MCF 10A (cell line): ENCODE measurements at regions of chr3 and their contacts with region 1.

Region 1: GRCh38 chr3:36957862-36958686 is 13.2 kb upstream of the TRANK1 start:
- DNase-seq: peak; percentile 82
- H3K4me3 Mint-ChIP-seq: peak overlapping the region; percentile 38
- H3K27ac Mint-ChIP-seq: peak overlapping the region; percentile 90
- H3K4me1 Mint-ChIP-seq: peaks cover 11% of the 10 kb centered on the region
- H3K27me3 Mint-ChIP-seq: no peaks in the 10 kb centered on the region
- CTCF ChIP-seq: no peak

Region 2: GRCh38 chr3:36679384-36680200 is 278.5 kb before region 1 on chr3:
- CTCF ChIA-PET with region 1: no interaction called
- POLR2A ChIA-PET with region 1: no interaction called
- intact Hi-C with region 1: no loop called
- DNase-seq: peak; percentile 80
- H3K4me3 Mint-ChIP-seq: peak overlapping the region; percentile 41
- H3K27ac Mint-ChIP-seq: peak overlapping the region; percentile 99
- H3K4me1 Mint-ChIP-seq: peaks cover 34% of the 10 kb centered on the region
- H3K27me3 Mint-ChIP-seq: no peaks in the 10 kb centered on the region
- CTCF ChIP-seq: no peak

Region 3: GRCh38 chr3:36729204-36730056 is 228.6 kb before region 1 on chr3:
- CTCF ChIA-PET with region 1: interaction called, 82 read pairs
- POLR2A ChIA-PET with region 1: no interaction called
- intact Hi-C with region 1: loop called (anchors 1 kb)
- DNase-seq: peak; percentile 64
- H3K4me3 Mint-ChIP-seq: no peak overlapping the region
- H3K27ac Mint-ChIP-seq: no peak overlapping the region
- H3K4me1 Mint-ChIP-seq: no peaks in the 10 kb centered on the region
- H3K27me3 Mint-ChIP-seq: peaks cover 21% of the 10 kb centered on the region
- CTCF ChIP-seq: peak; percentile 72

Region 4: GRCh38 chr3:36814776-36815175 is 143.3 kb before region 1 on chr3:
- CTCF ChIA-PET with region 1: interaction called, 10 read pairs
- POLR2A ChIA-PET with region 1: interaction called, 5 read pairs
- intact Hi-C with region 1: no loop called
- DNase-seq: no peak
- H3K4me3 Mint-ChIP-seq: no peak overlapping the region
- H3K27ac Mint-ChIP-seq: no peak overlapping the region
- H3K4me1 Mint-ChIP-seq: peaks cover 11% of the 10 kb centered on the region
- H3K27me3 Mint-ChIP-seq: no peaks in the 10 kb centered on the region
- CTCF ChIP-seq: no peak

Region 5: DNA sequence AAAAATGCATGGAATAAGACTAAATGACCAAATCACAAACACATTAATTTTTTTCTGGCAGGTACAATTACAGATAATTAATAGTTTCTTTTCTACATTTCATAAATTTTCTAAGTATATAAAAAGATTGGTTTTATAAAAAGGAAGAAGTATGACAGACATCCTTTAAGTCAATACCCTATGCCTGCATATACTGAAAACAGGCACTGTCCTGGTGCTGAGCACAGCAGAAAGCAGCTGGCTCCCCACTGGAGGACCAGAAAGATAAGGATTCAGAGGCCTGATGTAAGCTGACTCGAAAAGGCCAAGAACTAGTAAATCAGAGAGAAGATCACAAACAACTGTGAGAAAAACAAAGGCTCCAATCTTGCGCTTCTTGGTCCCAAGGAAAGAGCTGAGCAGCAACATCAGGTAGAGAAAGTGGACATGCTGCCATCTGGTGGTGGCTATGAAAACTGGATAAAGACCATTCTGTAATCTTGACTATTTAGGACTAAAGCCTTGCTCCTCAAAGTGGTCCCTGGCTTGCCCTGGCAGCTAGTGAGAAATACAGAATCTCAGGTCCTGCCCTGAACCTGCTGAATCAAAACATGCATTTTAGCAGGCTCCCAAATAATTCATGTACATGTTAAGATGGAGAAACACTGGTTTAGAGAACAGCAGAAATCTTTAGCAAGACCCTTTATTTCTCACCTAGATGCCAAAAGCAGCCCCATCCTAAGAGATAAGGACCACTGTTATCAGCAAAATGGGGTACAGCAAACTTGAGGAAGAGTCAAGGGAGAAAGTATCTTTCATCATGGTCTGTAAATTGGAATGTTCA is 89.2 kb before region 1 on chr3:
- CTCF ChIA-PET with region 1: interaction called, 49 read pairs
- POLR2A ChIA-PET with region 1: interaction called, 3 read pairs
- intact Hi-C with region 1: loop called (anchors 1 kb)
- DNase-seq: peak; percentile 73
- H3K4me3 Mint-ChIP-seq: no peak overlapping the region
- H3K27ac Mint-ChIP-seq: no peak overlapping the region
- H3K4me1 Mint-ChIP-seq: peaks cover 5% of the 10 kb centered on the region
- H3K27me3 Mint-ChIP-seq: no peaks in the 10 kb centered on the region
- CTCF ChIP-seq: peak; percentile 82

Region 6: DNA sequence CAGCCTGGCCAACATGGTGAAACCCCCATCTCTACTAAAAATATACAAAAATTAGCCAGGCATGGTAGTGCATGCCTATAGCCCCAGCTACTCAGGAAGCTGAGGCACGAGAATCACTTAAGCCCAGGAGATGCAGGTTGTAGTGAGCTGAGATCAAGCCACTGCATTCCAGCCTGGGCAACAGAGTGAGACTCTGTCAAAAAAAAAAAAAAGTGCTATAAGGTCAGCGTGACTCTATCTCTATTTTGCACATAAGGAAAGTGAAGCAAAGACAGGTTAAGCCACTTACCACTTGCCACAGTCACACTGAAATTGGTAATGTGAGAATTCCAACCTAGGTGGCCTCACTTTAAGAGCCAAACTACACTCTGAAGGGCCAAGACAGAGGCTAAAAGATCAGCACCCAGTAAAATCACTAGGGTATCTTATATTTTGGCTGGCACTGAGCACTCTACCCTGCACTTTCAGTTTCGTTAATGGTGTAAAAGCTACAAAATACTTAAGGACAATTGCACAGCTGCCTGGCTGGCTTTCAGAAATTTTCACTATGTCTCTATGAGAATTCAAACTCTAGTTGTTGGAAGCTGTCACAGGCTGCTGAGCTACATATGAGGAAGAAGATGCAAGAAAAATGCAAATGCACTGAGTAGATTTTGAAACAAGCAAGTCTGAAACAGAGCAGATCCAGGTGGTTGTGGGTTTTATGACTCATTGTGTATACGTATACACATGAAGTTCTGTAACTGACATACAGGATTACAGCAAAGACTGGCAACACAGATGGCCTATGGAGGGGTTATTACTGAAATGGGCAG is 45.9 kb before region 1 on chr3:
- CTCF ChIA-PET with region 1: interaction called, 126 read pairs
- POLR2A ChIA-PET with region 1: interaction called, 43 read pairs
- intact Hi-C with region 1: no loop called
- DNase-seq: peak; percentile 81
- H3K4me3 Mint-ChIP-seq: peak overlapping the region; percentile 71
- H3K27ac Mint-ChIP-seq: peak overlapping the region; percentile 93
- H3K4me1 Mint-ChIP-seq: peaks cover 28% of the 10 kb centered on the region
- H3K27me3 Mint-ChIP-seq: no peaks in the 10 kb centered on the region
- CTCF ChIP-seq: no peak

Region 7: DNA sequence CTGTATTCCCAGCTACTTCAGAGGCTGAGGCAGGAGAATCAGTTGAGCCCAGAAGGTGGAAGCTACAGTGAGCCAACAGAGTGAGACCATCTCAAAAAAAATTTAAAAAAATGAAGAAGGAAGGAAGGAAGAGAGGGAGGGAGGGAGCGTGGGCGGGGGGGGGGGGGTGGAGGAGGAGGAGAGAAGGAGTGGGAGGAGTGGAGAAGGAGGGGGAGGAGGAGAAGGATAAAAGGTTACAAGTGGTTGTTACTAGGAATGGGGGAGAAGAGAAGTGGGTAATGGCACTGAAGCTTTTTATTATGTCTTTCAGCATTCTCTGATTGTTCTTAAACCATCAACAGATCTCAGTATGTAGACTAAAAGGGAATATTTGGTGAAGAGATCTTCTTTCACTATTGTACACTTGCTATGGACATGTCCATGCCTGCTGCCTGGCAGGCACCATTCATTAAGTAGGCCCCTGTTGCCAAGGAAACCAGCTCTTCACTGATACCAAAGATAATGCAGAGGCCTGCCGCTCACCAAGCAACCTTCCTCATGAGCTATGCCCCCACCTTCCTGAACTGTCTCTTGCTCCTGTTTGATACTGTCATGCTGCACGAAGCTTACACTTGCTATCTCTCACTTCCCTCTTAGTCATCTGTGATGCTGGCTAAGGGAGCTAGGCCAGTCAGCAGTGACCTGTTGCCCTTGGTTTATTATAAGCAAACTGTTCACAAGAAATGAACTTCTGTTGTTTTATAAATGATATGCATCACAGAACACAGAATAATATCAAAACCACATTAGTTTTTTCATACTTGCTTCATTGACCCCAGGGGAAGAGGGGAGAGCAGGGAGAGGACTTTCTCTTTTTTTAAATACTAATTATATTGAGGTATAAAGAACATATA is 11.7 kb after region 1 on chr3:
- CTCF ChIA-PET with region 1: interaction called, 28 read pairs
- POLR2A ChIA-PET with region 1: interaction called, 12 read pairs
- intact Hi-C with region 1: no loop called
- DNase-seq: peak; percentile 59
- H3K4me3 Mint-ChIP-seq: no peak overlapping the region
- H3K27ac Mint-ChIP-seq: peak overlapping the region; percentile 70
- H3K4me1 Mint-ChIP-seq: peaks cover 13% of the 10 kb centered on the region
- H3K27me3 Mint-ChIP-seq: no peaks in the 10 kb centered on the region
- CTCF ChIP-seq: no peak

Region 8: GRCh38 chr3:36993326-36994283 is 35.5 kb after region 1 on chr3 and contains the start of gene MLH1:
- CTCF ChIA-PET with region 1: interaction called, 11 read pairs
- POLR2A ChIA-PET with region 1: interaction called, 32 read pairs
- intact Hi-C with region 1: no loop called
- DNase-seq: peak; percentile 89
- H3K4me3 Mint-ChIP-seq: no peak within 1 kb of the TSS
- H3K27ac Mint-ChIP-seq: no peak within 1 kb of the TSS
- H3K4me1 Mint-ChIP-seq: no peaks in the 10 kb centered on the region
- H3K27me3 Mint-ChIP-seq: no peaks in the 10 kb centered on the region
- CTCF ChIP-seq: no peak
- total RNA-seq, gene MLH1: 57.0 and 65.0 TPM in 2 replicates